ENCODE measurements at regions of chr5 and their contacts with region 1.

Region 1: DNA sequence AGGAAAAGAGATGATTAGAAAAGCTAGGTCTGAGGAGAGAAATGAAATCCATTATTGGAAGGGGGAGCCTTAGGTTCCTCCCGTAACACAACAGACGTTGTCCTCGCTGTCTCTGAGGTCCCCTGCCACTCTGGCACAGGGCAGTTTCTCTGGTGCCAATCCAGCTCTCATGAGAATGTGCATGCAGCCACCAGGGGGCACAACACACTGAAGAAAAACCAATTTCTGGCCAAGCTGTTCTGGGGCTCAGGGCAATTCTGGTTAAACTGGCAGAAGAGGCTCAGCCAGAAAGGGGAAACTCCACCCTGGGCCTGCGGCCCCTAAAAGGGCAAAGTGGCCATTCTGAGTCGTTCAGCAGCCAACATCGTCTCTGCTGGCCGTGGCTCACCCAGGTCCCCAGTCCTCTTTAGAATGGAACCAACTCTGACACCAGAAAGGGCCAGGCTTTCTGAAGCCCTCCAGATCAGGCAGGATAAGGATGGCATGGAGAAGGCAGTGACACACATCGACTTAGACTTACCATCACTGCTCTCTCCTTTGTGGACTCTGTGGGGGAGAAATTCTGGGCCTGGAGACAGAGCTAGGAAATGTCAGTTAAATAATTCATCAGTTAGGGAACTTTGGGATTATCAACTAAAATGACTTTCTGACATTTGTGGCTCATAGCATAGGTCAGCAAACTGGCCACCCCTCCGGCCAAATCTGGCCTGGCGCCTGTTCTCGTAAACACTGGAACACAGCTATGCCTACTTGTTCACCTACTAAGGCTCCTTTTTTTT is 58.5 kb upstream of the GOLPH3 start:
- DNase-seq: peak; percentile 90
- H3K4me3 ChIP-seq: no peak overlapping the region
- H3K27ac ChIP-seq: peak overlapping the region; percentile 85 to 91
- H3K4me1 ChIP-seq: peaks cover 16% of the 10 kb centered on the region
- H3K27me3 ChIP-seq: no peaks in the 10 kb centered on the region
- CTCF ChIP-seq: peak; percentile 86 to 95 (median 92)
- POLR2A ChIP-seq: peak; percentile 13

Region 2: GRCh38 chr5:32312647-32313523 is 80.3 kb after region 1 on chr5 and contains the start of gene MTMR12:
- intact Hi-C with region 1: loop called (anchors 5 kb)
- DNase-seq: peak; percentile 100
- H3K4me3 ChIP-seq: peak within 1 kb of the TSS; percentile 96 to 98
- H3K27ac ChIP-seq: peak within 1 kb of the TSS; percentile 98 to 99
- H3K4me1 ChIP-seq: no peaks in the 10 kb centered on the region
- H3K27me3 ChIP-seq: no peaks in the 10 kb centered on the region
- CTCF ChIP-seq: no peak
- POLR2A ChIP-seq: peak; percentile 94
- total RNA-seq, gene MTMR12: 43.1 to 70.7 TPM

Region 3: DNA sequence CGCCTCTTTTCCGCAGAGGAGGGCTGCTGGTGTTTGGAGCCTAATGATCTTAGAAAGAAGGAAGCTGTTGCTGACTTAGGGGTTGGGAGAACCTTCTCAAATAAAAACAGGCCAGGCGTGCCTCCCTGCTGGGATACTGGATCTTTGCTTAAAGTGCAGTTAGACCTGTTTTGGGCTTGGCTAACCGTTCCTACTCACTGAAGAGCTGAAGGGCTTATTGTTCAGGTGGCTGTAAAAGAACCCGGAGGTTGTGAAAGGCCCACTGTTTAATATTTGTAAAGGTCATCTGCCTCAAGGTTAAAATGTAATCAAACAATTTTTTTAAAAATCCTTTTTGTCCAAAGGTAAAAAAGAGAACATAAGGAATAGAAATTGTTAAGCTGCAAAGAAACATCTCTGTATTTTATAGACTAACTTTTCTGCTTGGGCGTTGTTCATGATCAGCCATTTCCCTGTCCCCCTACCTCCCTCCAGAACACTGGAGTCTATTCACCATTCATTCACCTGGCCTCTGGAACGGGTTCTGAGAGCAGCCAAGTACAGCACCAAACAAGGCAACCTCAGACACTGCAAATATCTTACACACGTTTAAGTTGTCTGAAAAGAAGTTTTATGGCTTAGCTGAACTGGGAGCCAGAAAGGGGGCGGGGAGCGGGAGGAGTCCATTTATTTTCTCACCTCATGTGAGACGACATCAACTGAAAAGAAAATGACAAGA is 98.7 kb after region 1 on chr5:
- intact Hi-C with region 1: loop called (anchors 5 kb)
- DNase-seq: peak; percentile 92
- H3K4me3 ChIP-seq: no peak overlapping the region
- H3K27ac ChIP-seq: peak overlapping the region; percentile 84 to 92
- H3K4me1 ChIP-seq: peaks cover 9% of the 10 kb centered on the region
- H3K27me3 ChIP-seq: no peaks in the 10 kb centered on the region
- CTCF ChIP-seq: no peak
- POLR2A ChIP-seq: no peak

Region 4: GRCh38 chr5:32360906-32361305 is 128.3 kb after region 1 on chr5:
- intact Hi-C with region 1: no loop called
- DNase-seq: no peak
- H3K4me3 ChIP-seq: no peak overlapping the region
- H3K27ac ChIP-seq: no peak overlapping the region
- H3K4me1 ChIP-seq: no peaks in the 10 kb centered on the region
- H3K27me3 ChIP-seq: no peaks in the 10 kb centered on the region
- CTCF ChIP-seq: no peak
- POLR2A ChIP-seq: no peak

Region 5: GRCh38 chr5:32444431-32445286 is 212.0 kb after region 1 on chr5 and contains the start of gene ZFR:
- intact Hi-C with region 1: loop called (anchors 10 kb)
- DNase-seq: peak; percentile 89
- H3K4me3 ChIP-seq: peak within 1 kb of the TSS; percentile 86 to 88
- H3K27ac ChIP-seq: peak within 1 kb of the TSS; percentile 97
- H3K4me1 ChIP-seq: peaks cover 4% of the 10 kb centered on the region
- H3K27me3 ChIP-seq: no peaks in the 10 kb centered on the region
- CTCF ChIP-seq: peak in 2 of 4 experiments; percentile 4 to 12
- POLR2A ChIP-seq: peak; percentile 79
- total RNA-seq, gene ZFR: 69.0 to 73.7 TPM

Region 6: GRCh38 chr5:32613050-32613672 is 380.5 kb after region 1 on chr5:
- intact Hi-C with region 1: loop called (anchors 2 kb)
- DNase-seq: peak; percentile 67
- H3K4me3 ChIP-seq: no peak overlapping the region
- H3K27ac ChIP-seq: no peak overlapping the region
- H3K4me1 ChIP-seq: no peaks in the 10 kb centered on the region
- H3K27me3 ChIP-seq: no peaks in the 10 kb centered on the region
- CTCF ChIP-seq: peak; percentile 62 to 88 (median 80)
- POLR2A ChIP-seq: no peak

Region 7: GRCh38 chr5:32785611-32786216 is 553.1 kb after region 1 on chr5:
- intact Hi-C with region 1: no loop called
- DNase-seq: no peak
- H3K4me3 ChIP-seq: no peak overlapping the region
- H3K27ac ChIP-seq: no peak overlapping the region
- H3K4me1 ChIP-seq: no peaks in the 10 kb centered on the region
- H3K27me3 ChIP-seq: no peaks in the 10 kb centered on the region
- CTCF ChIP-seq: no peak
- POLR2A ChIP-seq: no peak

Measured in prostate gland (tissue), 2 donors.